ENCODE measurements at regions of chr6 and their contacts with region 1.

Region 1: DNA sequence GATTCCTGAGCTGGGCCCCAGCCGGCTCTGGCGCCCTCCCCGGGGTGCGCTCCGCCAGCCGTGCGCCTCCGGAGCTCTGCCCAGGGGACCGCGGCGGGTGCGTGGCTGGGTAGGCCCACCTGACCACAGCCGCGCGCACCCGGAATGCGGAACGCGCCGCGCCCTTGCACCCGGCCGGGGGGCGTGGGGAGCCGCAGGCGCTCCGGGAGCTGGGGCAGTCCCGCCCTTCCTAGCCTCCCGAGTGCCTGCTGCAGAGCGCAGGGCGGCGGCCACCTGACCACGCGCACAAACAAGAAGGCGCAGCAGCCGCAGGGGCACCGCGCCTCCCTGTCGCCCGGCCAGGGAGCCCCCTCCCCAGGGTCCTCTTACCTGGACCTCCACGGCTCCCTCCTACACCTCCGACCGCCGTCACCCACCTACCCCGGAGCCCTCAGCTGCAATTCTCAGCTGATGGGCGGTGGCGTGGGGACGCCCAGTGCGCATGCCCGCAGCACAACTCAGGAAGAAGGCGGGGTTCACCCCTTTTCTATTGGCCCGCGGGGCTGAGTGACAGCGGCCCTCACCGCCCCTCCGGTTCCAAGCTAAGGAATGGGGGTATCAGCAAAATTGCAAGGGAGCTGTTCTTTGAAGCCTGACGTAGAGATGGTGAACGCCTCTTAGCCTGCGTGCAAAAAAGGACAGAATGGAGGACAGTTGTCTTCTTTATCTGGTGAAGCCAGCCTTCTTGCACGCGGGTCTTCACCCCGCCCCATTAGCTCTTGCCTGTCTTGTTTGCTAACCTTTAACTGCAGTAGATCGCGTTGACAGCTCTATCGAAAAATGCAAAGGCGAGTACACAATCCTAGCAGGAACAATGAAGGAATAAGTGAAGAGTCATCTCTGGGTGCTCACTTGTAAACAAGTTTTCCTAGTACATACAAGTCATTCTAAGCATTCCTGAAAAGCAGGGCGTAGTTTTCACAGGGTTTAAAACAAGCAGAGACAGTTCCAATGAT is at the start of gene STX7:
- DNase-seq: peak; percentile 94
- H3K4me3 ChIP-seq: peak within 1 kb of the TSS; percentile 82
- H3K27ac ChIP-seq: peak within 1 kb of the TSS; percentile 79
- H3K4me1 ChIP-seq: peaks cover 41% of the 10 kb centered on the region
- CTCF ChIP-seq: no peak
- total RNA-seq, gene STX7: 66.5 and 88.8 TPM in 2 replicates

Region 2: GRCh38 chr6:131909408-131910218 is 603.3 kb before region 1 on chr6:
- CTCF ChIA-PET with region 1: no interaction called
- POLR2A ChIA-PET with region 1: no interaction called
- intact Hi-C with region 1: loop called (anchors 10 kb)
- DNase-seq: peak; percentile 79
- H3K4me3 ChIP-seq: no peak overlapping the region
- H3K27ac ChIP-seq: no peak overlapping the region
- H3K4me1 ChIP-seq: peaks cover 6% of the 10 kb centered on the region
- CTCF ChIP-seq: peak; percentile 94

Region 3: DNA sequence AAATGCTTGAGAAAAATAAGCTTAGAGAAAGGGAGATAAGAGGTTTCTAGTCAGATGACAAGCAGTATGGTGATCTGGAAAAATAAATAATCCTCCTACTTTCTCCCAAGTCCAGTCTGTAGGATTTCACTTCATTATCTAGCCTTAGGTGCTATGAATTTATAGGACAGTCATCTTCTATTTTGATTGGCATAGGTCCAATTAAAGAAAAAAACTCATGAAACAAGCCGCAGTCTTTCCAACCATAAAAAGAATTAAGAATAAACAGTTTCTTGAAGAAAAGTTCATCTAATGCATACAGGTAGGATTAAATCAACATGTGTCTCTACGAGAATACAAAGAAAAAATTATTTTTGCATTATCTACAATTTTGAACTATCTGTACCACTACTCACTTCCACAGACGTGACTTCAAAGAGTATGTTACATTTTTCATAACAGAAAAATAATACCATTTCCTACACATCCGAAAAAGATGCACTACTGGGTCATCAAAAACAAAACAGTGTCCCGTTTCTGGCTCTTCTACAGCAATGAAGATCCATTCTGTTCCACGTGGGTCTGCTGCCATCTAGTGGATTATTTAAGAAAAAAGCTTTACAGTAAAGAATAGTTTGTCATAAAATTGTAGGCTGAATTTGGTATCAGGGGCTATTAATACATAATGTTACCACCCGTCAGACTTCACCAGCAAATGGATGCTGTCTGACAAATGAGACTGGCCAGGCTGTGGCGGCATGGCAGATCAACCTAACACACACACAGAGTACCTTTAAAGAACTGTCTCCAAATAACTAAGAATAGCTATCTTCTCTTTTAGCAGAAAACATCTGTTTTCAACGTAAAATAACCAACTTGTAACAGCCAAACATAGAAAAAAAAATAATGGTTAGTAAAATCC is 28.9 kb before region 1 on chr6:
- CTCF ChIA-PET with region 1: no interaction called
- POLR2A ChIA-PET with region 1: interaction called, 52 read pairs
- intact Hi-C with region 1: no loop called
- DNase-seq: peak; percentile 84
- H3K4me3 ChIP-seq: peak overlapping the region; percentile 45
- H3K27ac ChIP-seq: peak overlapping the region; percentile 83
- H3K4me1 ChIP-seq: peaks cover 59% of the 10 kb centered on the region
- CTCF ChIP-seq: peak; percentile 95

Region 4: GRCh38 chr6:132498638-132499037 is 14.3 kb before region 1 on chr6:
- CTCF ChIA-PET with region 1: interaction called, 8 read pairs
- POLR2A ChIA-PET with region 1: interaction called, 63 read pairs
- intact Hi-C with region 1: loop called (anchors 1 kb)
- DNase-seq: peak; percentile 81
- H3K4me3 ChIP-seq: peak overlapping the region; percentile 24
- H3K27ac ChIP-seq: peak overlapping the region; percentile 100
- H3K4me1 ChIP-seq: peaks cover 90% of the 10 kb centered on the region
- CTCF ChIP-seq: no peak

Region 5: GRCh38 chr6:132659082-132659481 is 146.1 kb after region 1 on chr6 and contains the start of gene TAAR1:
- CTCF ChIA-PET with region 1: no interaction called
- POLR2A ChIA-PET with region 1: no interaction called
- intact Hi-C with region 1: no loop called
- DNase-seq: no peak
- H3K4me3 ChIP-seq: no peak within 1 kb of the TSS
- H3K27ac ChIP-seq: no peak within 1 kb of the TSS
- H3K4me1 ChIP-seq: no peaks in the 10 kb centered on the region
- CTCF ChIP-seq: no peak
- total RNA-seq, gene TAAR1: not detected in 2 replicates

Region 6: DNA sequence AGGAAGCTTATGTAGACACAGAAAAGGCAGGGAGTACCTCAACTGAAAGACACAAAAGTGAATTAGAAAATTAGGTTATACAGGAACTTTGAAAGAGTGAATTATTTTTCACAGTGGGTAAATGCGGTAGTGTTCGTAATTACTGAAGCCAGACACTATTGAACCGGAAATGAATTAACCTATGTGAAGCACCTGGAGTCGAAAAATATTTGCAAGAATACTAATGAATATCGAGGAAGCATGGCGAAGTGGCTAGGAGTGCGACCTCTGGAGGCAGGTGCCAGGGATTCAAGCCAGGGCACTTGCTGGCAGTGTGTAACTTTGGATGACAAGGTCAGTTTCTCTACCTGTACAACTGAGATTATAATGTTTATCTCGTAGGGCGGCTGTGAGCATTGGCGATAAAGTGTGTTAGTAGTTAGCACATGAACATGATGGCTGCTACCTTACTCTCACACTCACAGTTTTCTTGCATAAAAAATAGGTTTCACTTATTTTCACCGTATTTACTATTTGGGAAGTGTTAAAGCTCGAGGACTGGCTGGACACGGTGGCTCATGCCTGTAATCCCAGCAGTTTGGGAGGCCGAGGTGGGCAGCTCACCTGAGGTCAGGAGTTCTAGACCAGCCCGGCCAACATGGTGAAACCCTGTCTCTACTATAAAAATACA is 286.1 kb after region 1 on chr6:
- CTCF ChIA-PET with region 1: no interaction called
- POLR2A ChIA-PET with region 1: interaction called, 5 read pairs
- intact Hi-C with region 1: loop called (anchors 2 kb)
- DNase-seq: peak; percentile 88
- H3K4me3 ChIP-seq: no peak overlapping the region
- H3K27ac ChIP-seq: no peak overlapping the region
- H3K4me1 ChIP-seq: peaks cover 7% of the 10 kb centered on the region
- CTCF ChIP-seq: peak; percentile 94

Measured in OCI-LY7 (cell line).